ENCODE measurements at regions of chr9 and their contacts with region 1.

Region 1: GRCh38 chr9:113275157-113276131 is at the starts of genes CDC26 and PRPF4:
- DNase-seq: peak; percentile 95 to 98
- ATAC-seq: peak; percentile 96 to 97
- H3K4me3 ChIP-seq: peak within 1 kb of the TSS; percentile 78
- H3K27ac ChIP-seq: peak within 1 kb of the TSS; percentile 88 to 93
- H3K4me1 ChIP-seq: peaks cover 28% of the 10 kb centered on the region; the same call in 2 of the 3 replicates
- CTCF ChIP-seq: no peak
- EP300 ChIP-seq: no peak
- POLR2A ChIP-seq: peak; percentile 95
- RAD21 ChIP-seq: no peak
- polyA plus RNA-seq, gene CDC26: 60.4 and 80.7 TPM in 2 replicates
- polyA plus RNA-seq, gene PRPF4: 61.5 and 62.1 TPM in 2 replicates

Region 2: DNA sequence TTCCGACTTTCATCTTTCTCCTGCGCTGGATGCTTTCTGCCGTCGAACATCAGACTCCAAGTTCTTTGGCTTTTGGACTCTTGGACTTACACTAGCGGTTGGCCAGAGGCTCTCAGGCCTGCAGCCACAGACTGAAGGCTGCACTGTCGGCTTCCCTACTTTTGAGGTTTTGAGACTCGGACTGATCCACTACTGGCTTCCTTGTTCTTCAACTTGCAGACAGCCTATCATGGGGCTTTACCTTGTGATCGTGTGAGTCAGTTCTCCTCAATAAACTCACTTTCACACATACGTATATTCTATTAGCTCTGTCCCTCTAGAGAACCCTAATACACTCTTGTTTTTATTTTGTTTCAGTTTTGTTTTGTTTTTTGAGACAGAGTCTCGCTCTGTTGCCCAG is 64.6 kb before region 1 on chr9:
- CTCF ChIA-PET with region 1: no interaction called
- POLR2A ChIA-PET with region 1: no interaction called
- DNase-seq: no peak
- ATAC-seq: no peak
- H3K4me3 ChIP-seq: no peak overlapping the region
- H3K27ac ChIP-seq: no peak overlapping the region
- H3K4me1 ChIP-seq: peaks cover 5% of the 10 kb centered on the region; the same call in 2 of the 3 replicates
- CTCF ChIP-seq: no peak
- EP300 ChIP-seq: no peak
- POLR2A ChIP-seq: no peak
- RAD21 ChIP-seq: no peak

Region 3: GRCh38 chr9:113221003-113221799 is 54.2 kb before region 1 on chr9 and contains the starts of genes FKBP15 and SLC31A1:
- CTCF ChIA-PET with region 1: interaction called, 6 read pairs
- POLR2A ChIA-PET with region 1: interaction called, 22 read pairs
- DNase-seq: peak; percentile 97 to 99
- ATAC-seq: peak; percentile 97 to 98
- H3K4me3 ChIP-seq: peak within 1 kb of the TSS; percentile 81
- H3K27ac ChIP-seq: peak within 1 kb of the TSS; percentile 80 to 88
- H3K4me1 ChIP-seq: peaks cover 26% of the 10 kb centered on the region
- CTCF ChIP-seq: no peak
- EP300 ChIP-seq: no peak
- POLR2A ChIP-seq: peak; percentile 82
- RAD21 ChIP-seq: no peak
- polyA plus RNA-seq, gene FKBP15: 26.0 and 26.8 TPM in 2 replicates
- polyA plus RNA-seq, gene SLC31A1: 27.9 and 28.0 TPM in 2 replicates

Region 4: GRCh38 chr9:113255438-113255837 is 20.0 kb before region 1 on chr9:
- CTCF ChIA-PET with region 1: interaction called, 18 read pairs
- POLR2A ChIA-PET with region 1: interaction called, 3 read pairs
- DNase-seq: no peak
- ATAC-seq: no peak
- H3K4me3 ChIP-seq: no peak overlapping the region
- H3K27ac ChIP-seq: no peak overlapping the region
- H3K4me1 ChIP-seq: no peaks in the 10 kb centered on the region
- CTCF ChIP-seq: no peak
- EP300 ChIP-seq: no peak
- POLR2A ChIP-seq: no peak
- RAD21 ChIP-seq: no peak

Region 5: GRCh38 chr9:113328045-113328782 is 52.8 kb after region 1 on chr9:
- CTCF ChIA-PET with region 1: no interaction called
- POLR2A ChIA-PET with region 1: no interaction called
- DNase-seq: no peak
- ATAC-seq: no peak
- H3K4me3 ChIP-seq: no peak overlapping the region
- H3K27ac ChIP-seq: no peak overlapping the region
- H3K4me1 ChIP-seq: no peaks in the 10 kb centered on the region
- CTCF ChIP-seq: no peak
- EP300 ChIP-seq: no peak
- POLR2A ChIP-seq: no peak
- RAD21 ChIP-seq: no peak

Region 6: DNA sequence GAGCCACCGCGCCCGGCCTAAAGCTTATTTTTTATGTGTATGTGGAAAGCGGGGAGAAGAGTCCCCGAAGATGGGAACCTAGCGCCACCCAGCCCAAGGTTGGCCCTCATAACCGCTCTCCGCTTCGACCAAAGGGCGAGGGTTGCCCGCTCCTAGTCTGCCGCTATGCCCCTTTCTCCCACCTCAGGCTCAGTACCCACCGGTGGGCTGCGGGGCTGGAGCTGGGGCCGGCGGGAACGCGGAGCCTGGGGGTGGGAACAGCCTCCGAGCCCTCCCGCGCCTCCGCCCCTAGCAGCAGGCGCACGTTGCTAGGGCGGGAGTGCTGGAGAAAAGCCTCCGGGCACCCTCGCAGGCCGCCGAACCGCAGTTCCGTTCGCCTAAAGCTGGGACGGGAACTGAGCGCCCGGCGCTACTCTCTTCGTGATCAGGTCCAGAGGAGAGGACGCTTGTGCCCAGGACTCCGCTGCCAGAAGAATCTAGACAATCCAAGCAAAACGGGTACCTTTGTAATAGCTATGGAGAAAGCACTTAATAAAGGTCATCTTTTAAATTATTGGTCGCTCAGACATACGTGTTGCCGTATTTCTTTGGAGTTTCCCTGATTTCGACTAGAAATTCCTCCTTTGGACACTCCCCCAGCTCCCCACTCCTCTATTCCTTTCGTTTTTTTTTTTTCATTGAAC is 64.7 kb after region 1 on chr9 and contains the start of gene WDR31:
- CTCF ChIA-PET with region 1: interaction called, 6 read pairs
- POLR2A ChIA-PET with region 1: interaction called, 14 read pairs
- DNase-seq: peak; percentile 91 to 93
- ATAC-seq: peak; percentile 99
- H3K4me3 ChIP-seq: peak within 1 kb of the TSS; percentile 51
- H3K27ac ChIP-seq: peak within 1 kb of the TSS; percentile 69 to 91
- H3K4me1 ChIP-seq: 0 out of 3 replicates have a peak, but pooled peaks cover 4% of the 10 kb centered on the region
- CTCF ChIP-seq: no peak
- EP300 ChIP-seq: no peak
- POLR2A ChIP-seq: peak; percentile 68
- RAD21 ChIP-seq: peak; percentile 10 to 14; a peak in 2 of 5 replicates
- polyA plus RNA-seq, gene WDR31: 2.9 and 3.7 TPM in 2 replicates

Region 7: DNA sequence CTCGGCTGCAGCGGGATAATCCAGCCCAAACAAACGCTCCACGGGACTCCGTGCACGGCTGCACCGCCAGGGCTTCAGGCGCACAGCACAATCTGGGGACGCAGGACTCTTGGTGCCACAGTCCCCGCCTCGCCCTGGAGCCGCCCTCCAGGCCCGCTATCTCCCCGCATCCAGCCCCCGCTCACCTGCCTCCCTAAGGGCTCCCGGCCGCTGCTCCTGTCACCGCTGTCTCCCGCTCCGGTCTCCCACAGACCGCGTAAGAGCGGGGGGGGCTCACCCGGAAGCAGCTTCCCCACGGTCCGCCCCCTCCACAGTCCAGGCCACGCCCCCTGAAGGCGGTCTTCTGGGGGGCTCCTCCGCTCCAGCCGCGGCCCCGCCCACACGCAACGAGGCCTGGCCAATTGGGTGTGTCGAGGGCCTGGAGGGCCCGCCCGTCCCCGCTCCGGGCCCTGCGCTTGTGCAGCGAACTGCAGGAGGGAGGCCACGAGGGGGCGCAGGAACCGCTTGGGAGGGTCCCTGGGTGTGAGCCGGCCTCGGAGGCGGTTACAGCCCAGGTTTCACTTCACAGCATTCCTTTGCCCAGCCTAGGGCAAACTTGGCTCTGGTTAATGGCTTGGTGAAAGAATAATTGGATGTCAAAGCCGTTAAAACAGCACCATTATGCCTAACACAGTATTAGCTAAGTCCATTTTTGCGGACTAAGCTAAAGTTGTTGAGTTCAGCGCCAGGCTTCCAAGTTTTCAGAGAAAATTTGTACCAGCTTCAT is 125.8 kb after region 1 on chr9 and contains the start of gene ALAD:
- CTCF ChIA-PET with region 1: interaction called, 15 read pairs
- POLR2A ChIA-PET with region 1: interaction called, 12 read pairs
- DNase-seq: peak; percentile 93 to 98
- ATAC-seq: peak; percentile 97 to 98
- H3K4me3 ChIP-seq: peak within 1 kb of the TSS; percentile 73
- H3K27ac ChIP-seq: peak within 1 kb of the TSS; percentile 66 to 85
- H3K4me1 ChIP-seq: peaks cover 10% of the 10 kb centered on the region; the same call in 1 of the 3 replicates
- CTCF ChIP-seq: peak; percentile 85
- EP300 ChIP-seq: no peak
- POLR2A ChIP-seq: peak; percentile 60
- RAD21 ChIP-seq: peak; percentile 49 to 66
- polyA plus RNA-seq, gene ALAD: 5.7 and 9.5 TPM in 2 replicates

Region 8: DNA sequence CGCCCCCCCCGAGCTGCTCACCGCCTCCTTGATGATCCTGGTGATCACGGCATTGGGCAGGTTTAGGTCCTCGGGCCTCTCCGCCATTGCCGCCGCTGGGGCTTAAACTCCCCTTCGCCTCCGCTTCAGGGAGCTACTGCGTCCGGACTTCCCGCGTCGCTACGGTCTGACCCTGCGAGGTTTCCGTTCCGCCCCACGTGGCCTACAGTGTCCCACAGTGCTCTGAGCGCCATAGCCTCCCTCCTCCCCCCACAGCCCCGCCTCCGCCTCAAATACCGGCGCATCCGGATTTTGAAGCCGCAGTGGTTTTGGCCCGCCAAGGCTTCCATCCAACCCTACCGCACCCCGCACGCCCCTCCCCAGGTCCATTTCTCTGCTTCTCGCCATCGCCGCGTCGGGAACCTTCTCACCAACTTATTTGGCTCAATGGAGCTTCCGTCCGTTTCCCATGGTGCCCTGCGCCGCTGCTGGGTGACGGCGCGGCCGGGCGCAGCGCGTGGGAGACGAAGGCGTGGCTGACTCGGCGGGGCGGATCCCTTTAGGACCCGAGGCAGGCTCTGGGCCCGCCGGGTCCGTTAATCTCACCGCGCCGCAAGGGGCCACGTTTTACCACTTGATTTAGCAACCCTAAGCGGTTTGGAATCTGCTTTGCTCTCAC is 134.9 kb after region 1 on chr9 and contains the starts of genes C9orf43 and POLE3:
- CTCF ChIA-PET with region 1: interaction called, 28 read pairs
- POLR2A ChIA-PET with region 1: interaction called, 22 read pairs
- DNase-seq: peak; percentile 90 to 97
- ATAC-seq: peak; percentile 97
- H3K4me3 ChIP-seq: peak within 1 kb of the TSS; percentile 70
- H3K27ac ChIP-seq: peak within 1 kb of the TSS; percentile 95 to 98
- H3K4me1 ChIP-seq: peaks cover 8% of the 10 kb centered on the region; the same call in 1 of the 3 replicates
- CTCF ChIP-seq: no peak
- EP300 ChIP-seq: no peak
- POLR2A ChIP-seq: peak; percentile 72
- RAD21 ChIP-seq: no peak
- polyA plus RNA-seq, gene C9orf43: 0.89 and 1.0 TPM in 2 replicates
- polyA plus RNA-seq, gene POLE3: 129 and 143 TPM in 2 replicates

Measured in A549 (cell line).